KBM-7 (cell line): ENCODE measurements at regions of chrX and their contacts with region 1.

Region 1: GRCh38 chrX:11533211-11533651 is 132.5 kb downstream of the ARHGAP6 start:
- DNase-seq: peak; percentile 82

Region 2: GRCh38 chrX:11381464-11381863 is 151.8 kb before region 1 on chrX:
- in situ Hi-C with region 1: no loop called
- DNase-seq: peak; percentile 48

Region 3: DNA sequence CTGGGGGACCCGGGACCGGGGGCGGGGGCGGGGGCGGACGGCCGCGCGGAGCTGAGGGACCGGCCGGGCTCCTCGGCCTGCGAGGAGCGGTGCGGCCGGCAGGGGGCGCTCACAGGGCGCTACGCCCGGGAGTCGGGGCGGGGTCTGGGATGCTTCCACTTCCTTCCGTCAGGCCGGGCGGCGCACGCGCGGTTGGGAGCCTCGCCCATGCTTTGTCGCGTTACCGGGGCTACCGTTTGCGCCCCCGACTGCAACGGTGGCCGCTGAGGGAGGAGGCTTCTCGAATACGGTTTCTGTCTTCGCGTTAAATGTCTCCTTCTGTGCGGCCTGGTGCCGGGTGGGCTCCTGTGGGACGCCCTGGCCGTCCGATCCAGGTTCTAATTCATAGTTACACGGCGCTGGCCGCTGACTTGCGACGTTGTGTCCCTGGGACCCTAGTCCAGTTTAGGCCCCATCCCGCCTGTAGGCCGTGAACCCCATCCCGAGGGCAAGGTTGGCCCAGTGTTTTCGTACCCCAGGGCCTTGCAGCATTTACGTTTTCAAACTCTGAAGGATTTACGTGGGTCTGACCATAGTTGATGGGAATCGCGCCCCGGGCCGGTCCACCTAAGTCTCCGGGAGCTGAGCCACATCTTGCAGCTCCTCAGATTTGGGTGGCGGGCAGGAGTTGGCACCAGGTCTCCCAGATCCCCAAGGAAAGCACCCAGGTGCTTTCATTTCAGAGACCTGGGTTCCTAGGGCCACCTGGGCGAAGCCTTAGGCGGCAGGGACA is 225.4 kb after region 1 on chrX:
- in situ Hi-C with region 1: loop called (anchors 25 kb)
- DNase-seq: peak; percentile 87